T-cell (primary cell): ENCODE measurements at regions of chr3 and their contacts with region 1.

Region 1: GRCh38 chr3:51734572-51734907 is 27.7 kb downstream of the GRM2 start:
- DNase-seq: peak in 1 of 35 experiments; percentile 9
- ATAC-seq: no peak
- H3K4me3 ChIP-seq: no peak overlapping the region
- H3K4me3 Mint-ChIP-seq: no peak overlapping the region
- H3K27ac ChIP-seq: no peak overlapping the region
- H3K27ac Mint-ChIP-seq: no peak overlapping the region
- H3K4me1 ChIP-seq: peaks cover 0 to 4% of the 10 kb centered on the region in 2 experiments
- H3K4me1 Mint-ChIP-seq: peaks cover 7 to 16% (median 10%) of the 10 kb centered on the region in 3 donors
- H3K27me3 ChIP-seq: peaks cover 0 to 6% of the 10 kb centered on the region in 2 experiments
- H3K27me3 Mint-ChIP-seq: peaks cover 5 to 29% of the 10 kb centered on the region in 2 donors

Region 2: GRCh38 chr3:53083521-53083920 is 1349.0 kb after region 1 on chr3:
- CTCF ChIA-PET with region 1: interaction called in 1 of 2 experiments, 11 read pairs
- POLR2A ChIA-PET with region 1: no interaction called
- DNase-seq: no peak
- ATAC-seq: no peak
- H3K4me3 ChIP-seq: no peak overlapping the region
- H3K4me3 Mint-ChIP-seq: no peak overlapping the region
- H3K27ac ChIP-seq: no peak overlapping the region
- H3K27ac Mint-ChIP-seq: no peak overlapping the region
- H3K4me1 ChIP-seq: no peaks in the 10 kb centered on the region
- H3K4me1 Mint-ChIP-seq: no peaks in the 10 kb centered on the region
- H3K27me3 ChIP-seq: no peaks in the 10 kb centered on the region
- H3K27me3 Mint-ChIP-seq: no peaks in the 10 kb centered on the region